Activated T-helper 2 cell treated with anti-CD3 and anti-CD28 coated beads, Interferon-gamma antibody, Interleukin-2, Interleukin-4, amounts not matched to agents 10 μg/mL and 5 μg/mL and 100 μg/mL, durations not matched to agents 14 hours and 24 hours and 36 hours (primary cell): ENCODE measurements at regions of chr2 and their contacts with region 1.

Region 1: DNA sequence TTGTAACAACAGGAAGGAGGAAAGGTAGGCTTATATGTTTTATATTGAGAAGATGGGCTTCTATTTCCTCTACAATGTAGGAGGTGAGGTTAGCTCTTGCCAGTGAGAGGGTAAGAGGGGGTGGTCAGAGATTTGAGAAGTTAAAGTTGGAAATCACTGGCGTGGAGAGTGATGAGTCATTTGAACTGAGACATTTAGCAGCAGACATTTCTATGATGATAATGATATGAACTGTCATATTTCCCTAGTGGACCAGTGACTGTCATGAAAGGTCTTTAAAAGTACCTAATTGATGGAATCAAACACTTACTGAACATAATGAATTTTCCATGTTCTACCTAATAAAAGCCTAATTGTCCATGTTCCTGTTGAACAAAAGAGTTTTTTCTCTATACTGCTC is 126.1 kb downstream of the FAM161A start:
- DNase-seq: no peak
- H3K4me3 Mint-ChIP-seq: no peak overlapping the region
- H3K27ac Mint-ChIP-seq: no peak overlapping the region
- H3K4me1 Mint-ChIP-seq: peaks cover 12% of the 10 kb centered on the region
- H3K27me3 Mint-ChIP-seq: peaks cover 8% of the 10 kb centered on the region

Region 2: GRCh38 chr2:61707969-61708852 is 19.5 kb before region 1 on chr2:
- intact Hi-C with region 1: loop called (anchors 2 kb)
- DNase-seq: no peak
- H3K4me3 Mint-ChIP-seq: no peak overlapping the region
- H3K27ac Mint-ChIP-seq: no peak overlapping the region
- H3K4me1 Mint-ChIP-seq: peaks cover 8% of the 10 kb centered on the region
- H3K27me3 Mint-ChIP-seq: peaks cover 5% of the 10 kb centered on the region

Region 3: GRCh38 chr2:61764035-61764800 is 36.5 kb after region 1 on chr2:
- intact Hi-C with region 1: no loop called
- DNase-seq: peak; percentile 96
- H3K4me3 Mint-ChIP-seq: peak overlapping the region; percentile 89
- H3K27ac Mint-ChIP-seq: peak overlapping the region; percentile 94
- H3K4me1 Mint-ChIP-seq: peaks cover 15% of the 10 kb centered on the region
- H3K27me3 Mint-ChIP-seq: no peaks in the 10 kb centered on the region

Region 4: DNA sequence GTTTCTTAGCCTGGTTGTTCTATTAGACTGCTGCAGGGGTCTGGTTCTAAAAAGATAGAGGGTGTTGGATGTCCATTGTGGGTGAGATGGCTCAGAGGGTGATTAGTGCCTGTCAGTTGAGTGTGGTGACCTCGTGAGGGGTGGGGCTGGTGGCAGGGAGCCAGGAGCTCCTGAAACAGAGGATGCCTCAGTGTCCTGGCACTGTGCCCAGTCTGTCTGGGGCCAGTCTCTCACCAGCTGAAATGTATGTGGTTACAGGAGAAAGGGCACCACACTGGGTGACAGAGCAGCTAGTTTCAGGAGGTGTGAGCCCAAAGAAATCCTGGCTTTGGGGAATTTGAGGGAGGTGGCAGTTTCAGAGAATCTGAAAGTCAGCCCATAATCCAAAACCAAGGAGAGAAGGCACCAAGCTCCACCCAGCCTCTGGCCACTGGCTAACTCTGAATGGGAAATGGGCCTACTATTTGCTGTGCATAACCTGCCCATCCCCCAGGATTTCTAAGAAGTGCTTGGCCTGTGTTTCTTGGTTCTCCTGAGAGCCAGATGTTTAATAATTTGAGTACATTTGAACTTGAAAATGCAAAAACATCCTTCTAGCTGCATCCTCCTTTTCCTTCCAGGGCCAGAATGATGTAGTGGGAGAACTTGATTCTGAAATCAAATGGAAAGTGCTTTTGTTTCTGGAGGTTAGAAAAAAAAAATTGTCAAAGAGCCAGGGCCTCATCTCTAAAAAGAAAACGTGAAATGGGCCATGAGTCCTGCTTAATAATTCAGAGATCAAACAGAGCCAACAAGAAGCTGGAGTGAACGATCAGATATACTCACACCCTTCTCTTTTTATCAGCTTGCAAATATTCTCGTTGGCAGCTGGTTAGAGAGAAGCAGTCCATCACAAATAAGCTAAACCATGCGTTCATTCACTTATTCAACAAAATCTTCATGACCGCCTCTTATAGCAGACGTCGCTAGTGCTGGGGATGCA is 560.4 kb after region 1 on chr2:
- intact Hi-C with region 1: no loop called
- DNase-seq: no peak
- H3K4me3 Mint-ChIP-seq: no peak overlapping the region
- H3K27ac Mint-ChIP-seq: no peak overlapping the region
- H3K4me1 Mint-ChIP-seq: peaks cover 4% of the 10 kb centered on the region
- H3K27me3 Mint-ChIP-seq: no peaks in the 10 kb centered on the region